K562 (cell line): ENCODE measurements at regions of chr10 and their contacts with region 1.

Region 1: GRCh38 chr10:97210543-97210961 is 24.8 kb upstream of the SLIT1 start:
- DNase-seq: peak; percentile 60 to 77 (median 70)
- ATAC-seq: peak; percentile 88
- H3K4me3 ChIP-seq: no peak overlapping the region
- H3K27ac ChIP-seq: no peak overlapping the region
- H3K4me1 ChIP-seq: peaks cover 0 to 5% of the 10 kb centered on the region in 2 experiments; a peak in 2 of 5 replicates
- H3K27me3 ChIP-seq: peaks cover 0 to 22% of the 10 kb centered on the region in 2 experiments; a peak in 2 of 5 replicates
- CTCF ChIP-seq: peak; percentile 81 to 90 (median 83)
- EP300 ChIP-seq: no peak
- POLR2A ChIP-seq: no peak
- RAD21 ChIP-seq: peak; percentile 39 to 68

Region 2: DNA sequence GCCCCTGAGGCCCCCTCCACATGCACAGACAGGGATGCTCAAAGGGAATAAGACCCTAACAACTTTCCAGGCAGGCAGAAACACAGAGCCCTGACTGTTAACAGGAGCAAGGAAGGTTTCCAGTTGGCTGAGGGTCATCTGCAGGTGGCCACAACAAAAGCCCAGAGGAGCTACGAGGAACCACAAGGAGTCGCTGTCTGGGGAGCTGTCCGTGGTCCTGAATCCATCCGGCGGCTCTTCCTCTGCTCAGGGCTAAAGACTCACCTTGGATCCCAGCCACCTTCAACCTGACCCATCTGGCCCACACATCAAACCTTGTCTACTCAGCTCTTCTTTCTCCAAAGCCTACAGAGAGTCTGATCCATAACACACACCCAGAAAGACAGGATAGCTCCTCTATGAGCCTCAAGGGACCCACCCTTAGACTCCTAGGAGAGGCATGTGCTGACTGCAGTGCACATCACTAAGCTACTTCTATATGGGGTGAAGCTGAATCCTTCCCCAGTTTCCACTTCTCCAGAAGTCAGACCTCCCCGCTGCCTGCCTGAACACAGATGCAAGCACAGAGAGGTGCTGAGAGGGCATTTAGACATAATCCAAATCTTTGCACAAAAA is 128.8 kb before region 1 on chr10:
- CTCF ChIA-PET with region 1: interaction called, 9 read pairs
- POLR2A ChIA-PET with region 1: no interaction called
- in situ Hi-C with region 1: loop called (anchors 5 kb)
- intact Hi-C with region 1: no loop called
- DNase-seq: peak; percentile 69 to 77 (median 74)
- ATAC-seq: peak; percentile 94
- H3K4me3 ChIP-seq: no peak overlapping the region
- H3K27ac ChIP-seq: no peak overlapping the region
- H3K4me1 ChIP-seq: no peaks in the 10 kb centered on the region
- H3K27me3 ChIP-seq: 0 out of 5 replicates have a peak, but pooled peaks cover 0 to 7% of the 10 kb centered on the region in 2 experiments
- CTCF ChIP-seq: peak; percentile 80 to 89 (median 84)
- EP300 ChIP-seq: no peak
- POLR2A ChIP-seq: no peak
- RAD21 ChIP-seq: peak; percentile 45 to 66